Calu3 (cell line): ENCODE measurements at regions of chr11 and their contacts with region 1.

Region 1: DNA sequence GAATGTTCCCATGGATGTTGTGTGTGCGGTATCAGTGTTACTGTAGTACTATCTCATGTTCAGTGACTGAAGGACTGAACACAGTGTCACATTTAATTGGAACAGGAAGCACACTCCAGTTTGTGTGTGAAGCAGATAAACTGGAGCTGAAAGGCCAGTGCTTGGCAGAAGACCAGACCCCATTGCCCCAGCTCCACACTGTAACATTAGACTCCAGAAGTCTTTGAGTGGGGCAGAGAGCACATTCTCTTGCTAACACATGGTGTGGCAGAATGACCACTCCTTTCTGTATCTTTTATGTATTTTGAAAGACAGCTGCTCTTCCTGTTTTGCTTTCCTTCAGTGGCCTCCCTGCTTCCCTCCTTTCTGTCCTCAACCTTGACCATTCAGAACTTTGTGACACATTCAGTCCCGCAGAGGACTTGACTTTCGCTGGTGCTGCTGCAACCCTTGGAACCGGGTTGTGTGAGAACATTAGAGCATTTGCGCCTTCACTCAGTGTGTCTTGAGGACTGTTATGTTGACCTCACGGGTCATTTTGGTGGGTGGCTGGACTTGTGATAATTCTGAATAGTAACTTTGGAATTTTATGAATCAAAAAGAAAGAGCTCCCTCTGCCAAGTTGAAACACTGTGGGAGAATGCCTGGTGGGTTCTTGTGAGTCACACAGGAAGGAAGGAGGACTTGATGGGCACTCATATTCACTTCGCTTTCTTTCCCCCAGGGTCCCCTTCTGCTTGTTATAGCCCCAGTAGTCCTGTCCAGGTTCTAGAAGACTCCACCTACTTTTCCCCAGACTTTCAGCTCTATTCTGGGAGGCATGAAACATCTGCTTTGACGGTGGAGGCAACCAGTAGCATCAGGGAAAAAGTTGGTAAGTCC is 26.4 kb downstream of the AMOTL1 start:
- DNase-seq: peak; percentile 33
- H3K4me3 Mint-ChIP-seq: no peak overlapping the region
- H3K27ac Mint-ChIP-seq: no peak overlapping the region
- H3K4me1 Mint-ChIP-seq: peaks cover 51% of the 10 kb centered on the region
- H3K27me3 Mint-ChIP-seq: no peaks in the 10 kb centered on the region
- CTCF ChIP-seq: no peak

Region 2: DNA sequence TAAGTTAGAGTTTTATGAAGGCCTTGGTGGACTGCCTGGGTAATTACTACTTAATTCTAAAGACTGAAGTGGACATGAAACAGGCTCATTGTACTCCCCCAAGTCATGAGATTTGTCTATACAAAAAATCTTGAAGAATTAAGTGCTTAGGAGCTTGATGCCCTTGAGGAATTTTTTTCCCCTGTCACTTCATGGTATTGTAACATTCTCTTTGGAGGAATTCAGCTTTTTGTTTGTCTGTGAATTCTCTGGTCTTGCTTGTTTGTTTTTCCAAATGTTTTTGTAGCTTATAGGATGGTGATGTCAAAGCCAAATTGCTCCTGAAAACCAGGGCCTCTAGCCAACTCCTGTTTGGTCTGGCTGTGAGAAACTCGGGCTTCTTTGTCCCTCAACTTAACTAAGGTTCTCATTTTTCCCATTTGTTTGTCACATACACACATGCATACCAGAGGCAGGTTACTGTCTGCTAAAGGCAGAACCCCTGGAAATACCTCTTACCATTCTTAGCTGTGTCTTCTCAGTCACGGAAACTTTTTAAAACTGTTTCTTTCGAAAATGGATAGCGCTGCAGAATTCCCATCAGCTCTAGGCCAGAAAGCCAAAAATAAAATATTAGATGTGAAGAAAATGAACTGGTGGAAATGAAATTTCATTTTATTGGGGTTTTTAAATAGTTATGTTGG is 40.5 kb after region 1 on chr11:
- CTCF ChIA-PET with region 1: no interaction called
- intact Hi-C with region 1: loop called (anchors 5 kb)
- DNase-seq: no peak
- H3K4me3 Mint-ChIP-seq: no peak overlapping the region
- H3K27ac Mint-ChIP-seq: no peak overlapping the region
- H3K4me1 Mint-ChIP-seq: peaks cover 16% of the 10 kb centered on the region
- H3K27me3 Mint-ChIP-seq: no peaks in the 10 kb centered on the region
- CTCF ChIP-seq: no peak